ENCODE measurements at regions of chr13 and their contacts with region 1.

Region 1: GRCh38 chr13:71879129-71879535 is 12.1 kb upstream of the DACH1 start:
- DNase-seq: peak; percentile 66 to 78 (median 76)
- H3K4me3 ChIP-seq: peak overlapping the region in 2 of 7 experiments; percentile 49 to 58
- H3K27ac ChIP-seq: no peak overlapping the region
- H3K4me1 ChIP-seq: peaks cover 0 to 4% (median 1%) of the 10 kb centered on the region in 4 experiments
- H3K27me3 ChIP-seq: no peaks in the 10 kb centered on the region

Region 2: GRCh38 chr13:71240911-71241310 is 638.2 kb before region 1 on chr13:
- CTCF ChIA-PET with region 1: interaction called, 10 read pairs
- POLR2A ChIA-PET with region 1: no interaction called
- DNase-seq: peak; percentile 11 to 50 (median 48)
- H3K4me3 ChIP-seq: no peak overlapping the region
- H3K27ac ChIP-seq: no peak overlapping the region
- H3K4me1 ChIP-seq: no peaks in the 10 kb centered on the region
- H3K27me3 ChIP-seq: no peaks in the 10 kb centered on the region

Region 3: GRCh38 chr13:71643448-71643860 is 235.7 kb before region 1 on chr13:
- CTCF ChIA-PET with region 1: no interaction called
- POLR2A ChIA-PET with region 1: no interaction called
- DNase-seq: no peak
- H3K4me3 ChIP-seq: no peak overlapping the region
- H3K27ac ChIP-seq: no peak overlapping the region
- H3K4me1 ChIP-seq: no peaks in the 10 kb centered on the region
- H3K27me3 ChIP-seq: no peaks in the 10 kb centered on the region

Region 4: DNA sequence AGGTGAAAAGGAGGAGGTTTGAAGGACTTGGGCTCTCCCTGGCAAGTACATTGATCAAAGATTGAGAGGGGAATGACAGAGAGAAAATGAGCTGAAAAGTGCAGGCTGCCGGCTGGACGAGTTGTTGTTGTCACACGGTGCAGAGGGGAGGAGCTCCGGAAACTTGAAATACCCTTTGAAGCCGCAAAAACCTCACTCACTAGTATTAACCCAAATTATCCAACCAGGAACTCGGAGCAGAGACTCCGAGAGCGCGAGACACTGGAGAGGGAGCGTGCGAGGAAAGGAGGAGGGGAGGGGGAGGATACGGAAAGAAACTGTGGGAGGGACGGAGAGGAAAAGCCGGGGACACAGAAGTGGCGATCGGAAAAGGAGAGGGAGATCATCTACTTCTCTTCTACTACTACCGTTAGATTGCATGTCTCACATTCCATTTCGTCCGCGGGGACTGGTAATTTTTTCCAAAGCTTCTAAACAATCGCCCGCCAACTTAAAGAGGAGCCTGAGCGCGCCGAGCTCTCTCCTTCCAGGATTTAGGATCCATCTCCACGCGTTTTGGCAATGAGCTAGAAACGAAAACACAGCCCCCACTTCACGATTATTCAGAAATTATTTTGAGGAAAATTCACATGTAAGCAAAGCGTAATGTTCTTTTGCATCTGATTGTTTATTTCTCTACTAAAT is 11.9 kb before region 1 on chr13 and contains the start of gene DACH1:
- CTCF ChIA-PET with region 1: interaction called, 32 read pairs
- POLR2A ChIA-PET with region 1: interaction called, 5 read pairs
- DNase-seq: peak; percentile 89 to 97 (median 96)
- H3K4me3 ChIP-seq: peak within 1 kb of the TSS; percentile 76 to 99 (median 98)
- H3K27ac ChIP-seq: peak within 1 kb of the TSS; percentile 77 to 79
- H3K4me1 ChIP-seq: peaks cover 7 to 37% (median 22%) of the 10 kb centered on the region in 4 experiments
- H3K27me3 ChIP-seq: no peaks in the 10 kb centered on the region

Measured in common myeloid progenitor, CD34-positive (primary cell).